Activated B cell treated with CpG ODN at 0.5 μM for 24 hours (primary cell): ENCODE measurements at regions of chr3 and their contacts with region 1.

Region 1: GRCh38 chr3:73024836-73025235 is 28.2 kb downstream of the PPP4R2 start:
- DNase-seq: no peak
- ATAC-seq: no peak
- H3K4me3 Mint-ChIP-seq: no peak overlapping the region
- H3K27ac Mint-ChIP-seq: no peak overlapping the region
- H3K4me1 Mint-ChIP-seq: peaks cover 63% of the 10 kb centered on the region
- H3K27me3 Mint-ChIP-seq: no peaks in the 10 kb centered on the region
- CTCF ChIP-seq: no peak

Region 2: GRCh38 chr3:72641684-72642083 is 383.2 kb before region 1 on chr3:
- CTCF ChIA-PET with region 1: no interaction called
- POLR2A ChIA-PET with region 1: no interaction called
- intact Hi-C with region 1: no loop called
- DNase-seq: no peak
- ATAC-seq: no peak
- H3K4me3 Mint-ChIP-seq: no peak overlapping the region
- H3K27ac Mint-ChIP-seq: no peak overlapping the region
- H3K4me1 Mint-ChIP-seq: peaks cover 6% of the 10 kb centered on the region
- H3K27me3 Mint-ChIP-seq: peaks cover 20% of the 10 kb centered on the region
- CTCF ChIP-seq: no peak

Region 3: GRCh38 chr3:72977060-72977808 is 47.6 kb before region 1 on chr3:
- CTCF ChIA-PET with region 1: no interaction called
- POLR2A ChIA-PET with region 1: no interaction called
- intact Hi-C with region 1: no loop called
- DNase-seq: no peak
- ATAC-seq: no peak
- H3K4me3 Mint-ChIP-seq: no peak overlapping the region
- H3K27ac Mint-ChIP-seq: no peak overlapping the region
- H3K4me1 Mint-ChIP-seq: no peaks in the 10 kb centered on the region
- H3K27me3 Mint-ChIP-seq: peaks cover 10% of the 10 kb centered on the region
- CTCF ChIP-seq: no peak

Region 4: GRCh38 chr3:73037369-73037699 is 12.5 kb after region 1 on chr3:
- CTCF ChIA-PET with region 1: no interaction called
- POLR2A ChIA-PET with region 1: no interaction called
- intact Hi-C with region 1: loop called (anchors 2 kb)
- DNase-seq: no peak
- ATAC-seq: no peak
- H3K4me3 Mint-ChIP-seq: no peak overlapping the region
- H3K27ac Mint-ChIP-seq: no peak overlapping the region
- H3K4me1 Mint-ChIP-seq: peaks cover 69% of the 10 kb centered on the region
- H3K27me3 Mint-ChIP-seq: no peaks in the 10 kb centered on the region
- CTCF ChIP-seq: no peak

Region 5: DNA sequence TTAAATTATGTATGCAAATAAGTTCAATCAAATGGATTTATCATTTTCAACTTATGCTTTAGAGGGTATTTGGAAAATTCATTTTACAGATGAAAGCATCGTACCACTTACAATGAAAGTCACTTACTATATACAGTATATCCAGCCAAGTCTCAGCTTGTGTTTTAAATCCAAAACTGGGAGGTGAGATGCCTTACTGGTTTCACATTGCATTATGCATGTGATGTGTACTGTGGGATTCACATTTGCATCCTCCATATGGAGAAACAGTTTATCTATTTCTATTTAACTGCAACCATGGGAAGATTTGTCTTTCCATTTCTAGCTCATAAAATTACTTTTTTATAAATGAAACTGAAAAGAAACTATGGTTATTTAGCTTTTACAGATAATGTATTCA is 1341.5 kb after region 1 on chr3:
- CTCF ChIA-PET with region 1: no interaction called
- POLR2A ChIA-PET with region 1: no interaction called
- intact Hi-C with region 1: no loop called
- DNase-seq: no peak
- ATAC-seq: no peak
- H3K4me3 Mint-ChIP-seq: no peak overlapping the region
- H3K27ac Mint-ChIP-seq: no peak overlapping the region
- H3K4me1 Mint-ChIP-seq: no peaks in the 10 kb centered on the region
- H3K27me3 Mint-ChIP-seq: no peaks in the 10 kb centered on the region
- CTCF ChIP-seq: no peak